A549 (cell line): ENCODE measurements at regions of chr11 and their contacts with region 1.

Region 1: GRCh38 chr11:65354265-65355012 is at the start of gene TIGD3:
- DNase-seq: peak; percentile 93 to 99
- ATAC-seq: peak; percentile 90 to 95
- H3K4me3 ChIP-seq: peak within 1 kb of the TSS; percentile 89
- H3K27ac ChIP-seq: peak within 1 kb of the TSS; percentile 75 to 88
- H3K4me1 ChIP-seq: 0 out of 3 replicates have a peak, but pooled peaks cover 4% of the 10 kb centered on the region
- CTCF ChIP-seq: no peak
- EP300 ChIP-seq: no peak
- POLR2A ChIP-seq: peak; percentile 65
- RAD21 ChIP-seq: no peak
- polyA plus RNA-seq, gene TIGD3: 0.30 and 0.37 TPM in 2 replicates

Region 2: DNA sequence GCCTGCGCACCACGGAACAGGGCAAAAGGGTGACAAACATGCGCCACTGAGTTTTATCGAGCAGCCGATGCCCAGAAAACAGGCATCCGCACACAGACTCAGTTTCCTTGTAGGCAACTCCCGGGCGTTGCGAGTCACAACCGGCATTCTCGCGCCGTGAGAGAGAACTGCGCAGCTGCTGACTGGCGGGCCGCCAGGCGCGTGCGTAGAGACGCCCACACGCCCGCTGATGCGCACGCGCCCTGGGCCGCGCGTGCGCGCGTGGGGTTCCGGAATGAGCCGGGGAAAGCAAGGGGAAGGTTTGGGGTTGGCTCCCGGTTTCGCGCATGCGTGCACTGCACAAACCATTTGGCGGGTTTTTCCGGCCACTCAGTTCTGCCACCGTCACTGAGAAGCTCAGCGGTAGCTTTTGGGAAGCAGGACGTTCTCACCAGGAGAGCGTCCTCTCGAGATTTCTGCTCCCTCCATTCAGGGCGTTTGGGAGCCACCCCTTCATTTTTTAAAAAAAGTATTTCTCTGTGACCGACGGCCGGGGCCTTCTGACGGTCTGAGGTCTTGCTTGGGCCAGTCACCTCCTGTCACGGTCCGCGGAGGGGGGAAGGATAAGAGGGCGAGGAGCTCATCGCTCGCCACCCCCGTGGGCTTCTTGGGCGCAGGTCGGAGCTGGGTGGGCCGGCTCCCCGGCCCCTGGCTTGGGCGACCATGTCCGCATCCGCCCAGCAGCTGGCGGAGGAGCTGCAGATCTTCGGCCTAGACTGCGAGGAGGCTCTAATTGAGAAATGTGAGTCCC is 92.7 kb before region 1 on chr11 and contains the start of gene POLA2:
- CTCF ChIA-PET with region 1: interaction called, 3,090 read pairs
- POLR2A ChIA-PET with region 1: no interaction called
- DNase-seq: peak; percentile 95 to 96
- ATAC-seq: peak; percentile 79 to 94
- H3K4me3 ChIP-seq: peak within 1 kb of the TSS; percentile 77
- H3K27ac ChIP-seq: peak within 1 kb of the TSS; percentile 82 to 93
- H3K4me1 ChIP-seq: peaks cover 11% of the 10 kb centered on the region
- CTCF ChIP-seq: no peak
- EP300 ChIP-seq: no peak
- POLR2A ChIP-seq: peak; percentile 85
- RAD21 ChIP-seq: no peak
- polyA plus RNA-seq, gene POLA2: 52.3 and 55.6 TPM in 2 replicates

Region 3: DNA sequence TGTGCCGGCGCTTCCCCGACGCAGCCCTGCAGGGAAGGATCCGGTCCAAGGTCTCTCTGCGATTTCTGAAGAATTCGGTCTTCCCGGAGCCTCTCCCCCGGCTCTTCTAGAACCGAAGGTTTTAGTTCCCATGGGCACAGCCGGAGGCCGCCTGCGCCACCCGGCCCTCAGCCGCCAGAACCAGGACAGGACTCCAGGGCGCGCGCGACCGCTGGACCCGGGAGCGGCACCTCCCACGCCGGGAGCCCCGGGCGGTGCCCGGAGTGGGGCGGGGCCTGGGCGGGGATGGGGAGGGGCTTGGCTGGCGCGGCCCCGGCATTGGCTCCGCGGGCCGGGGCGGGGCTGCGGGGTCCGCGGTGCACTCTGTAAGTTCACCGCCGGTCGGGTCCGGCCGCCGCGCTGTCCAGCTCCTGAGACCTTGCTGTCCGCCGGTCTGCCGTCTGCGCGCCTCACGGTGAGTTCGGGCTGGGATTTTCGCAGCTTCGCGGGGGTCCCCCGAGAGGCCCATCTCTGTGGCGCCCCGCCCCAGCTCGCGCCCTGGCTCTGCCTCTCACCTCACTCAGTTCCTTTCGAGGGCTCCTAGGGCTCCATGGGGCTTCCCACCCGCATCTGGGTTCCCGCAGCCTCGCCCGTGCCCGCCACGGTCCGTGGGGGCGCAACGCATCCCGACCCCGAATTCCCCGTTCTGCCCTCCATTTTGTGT is 39.8 kb before region 1 on chr11 and contains the start of gene CDC42EP2:
- CTCF ChIA-PET with region 1: interaction called, 3,090 read pairs
- POLR2A ChIA-PET with region 1: no interaction called
- DNase-seq: peak; percentile 77 to 84
- ATAC-seq: peak; percentile 73 to 88
- H3K4me3 ChIP-seq: peak within 1 kb of the TSS; percentile 99
- H3K27ac ChIP-seq: peak within 1 kb of the TSS; percentile 91
- H3K4me1 ChIP-seq: peaks cover 55% of the 10 kb centered on the region
- CTCF ChIP-seq: no peak
- EP300 ChIP-seq: no peak
- POLR2A ChIP-seq: peak; percentile 70
- RAD21 ChIP-seq: no peak
- polyA plus RNA-seq, gene CDC42EP2: 3.0 and 3.7 TPM in 2 replicates

Region 4: GRCh38 chr11:65340226-65340625 is 14.2 kb before region 1 on chr11:
- CTCF ChIA-PET with region 1: interaction called, 58 read pairs
- POLR2A ChIA-PET with region 1: no interaction called
- DNase-seq: no peak
- ATAC-seq: no peak
- H3K4me3 ChIP-seq: no peak overlapping the region
- H3K27ac ChIP-seq: no peak overlapping the region
- H3K4me1 ChIP-seq: peaks cover 3% of the 10 kb centered on the region; the same call in 2 of the 3 replicates
- CTCF ChIP-seq: no peak
- EP300 ChIP-seq: no peak
- POLR2A ChIP-seq: no peak
- RAD21 ChIP-seq: no peak

Region 5: DNA sequence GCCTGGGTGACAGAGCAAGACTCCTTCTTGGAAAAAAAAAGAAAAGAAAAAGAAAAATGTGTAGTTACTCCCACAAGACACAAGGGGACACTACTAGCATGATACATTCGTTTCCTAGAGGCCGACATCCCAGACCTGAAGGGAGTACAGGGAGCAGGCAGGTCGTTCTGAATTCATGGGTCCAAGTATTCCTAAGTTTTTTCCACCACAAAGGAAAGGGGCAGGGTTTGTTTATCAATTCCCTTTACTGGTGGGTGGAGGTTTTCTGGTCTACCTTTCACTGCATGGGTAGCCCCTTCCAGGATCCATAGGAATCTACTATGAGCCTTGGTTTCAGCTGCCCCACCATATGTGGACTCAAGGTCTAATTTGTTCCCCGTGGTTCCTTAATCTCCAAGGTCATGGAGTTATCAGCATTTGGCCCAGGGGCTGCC is 11.9 kb after region 1 on chr11:
- CTCF ChIA-PET with region 1: interaction called, 10 read pairs
- POLR2A ChIA-PET with region 1: no interaction called
- DNase-seq: peak; percentile 88 to 90
- ATAC-seq: peak; percentile 84 to 85
- H3K4me3 ChIP-seq: no peak overlapping the region
- H3K27ac ChIP-seq: peak overlapping the region; percentile 45 to 72; a peak in 5 of 6 replicates
- H3K4me1 ChIP-seq: peaks cover 18% of the 10 kb centered on the region
- CTCF ChIP-seq: peak; percentile 85
- EP300 ChIP-seq: no peak
- POLR2A ChIP-seq: no peak
- RAD21 ChIP-seq: peak; percentile 91 to 96

Region 6: DNA sequence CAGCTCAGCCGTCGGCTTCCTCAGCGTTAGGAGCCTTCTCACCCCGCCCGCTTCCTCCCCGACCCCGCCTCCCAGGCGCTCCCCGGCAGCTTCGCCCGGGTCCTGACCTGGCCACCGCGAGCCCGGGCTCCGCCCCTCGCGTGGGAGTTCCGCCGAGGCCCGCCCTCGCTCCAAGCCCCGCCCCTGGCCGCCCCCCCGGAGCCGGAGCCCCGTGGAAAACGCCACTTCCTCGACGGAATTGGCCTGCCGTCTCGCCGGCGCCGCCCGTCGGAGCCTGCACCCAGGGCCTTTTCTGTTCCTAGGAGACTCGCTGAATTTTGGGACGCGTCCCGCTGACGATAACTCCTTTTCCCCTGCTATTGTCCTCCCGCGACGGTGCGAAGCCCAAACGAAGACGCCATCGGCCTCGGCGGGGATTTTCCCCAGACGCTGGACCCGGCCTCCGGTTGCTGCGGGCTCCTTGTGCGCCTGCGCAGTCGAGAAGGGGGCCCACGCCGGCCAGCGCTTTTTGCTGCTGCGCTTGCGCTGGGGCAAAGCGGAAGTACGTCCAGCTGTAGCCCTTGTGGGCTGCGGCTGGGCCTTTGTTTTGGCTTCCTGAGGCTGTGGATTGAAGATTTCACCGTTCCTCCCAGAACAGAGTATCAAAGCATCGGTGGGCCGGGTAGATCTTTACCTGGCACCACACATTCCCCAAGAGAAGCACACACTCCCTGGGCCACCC is 298.2 kb after region 1 on chr11:
- CTCF ChIA-PET with region 1: no interaction called
- POLR2A ChIA-PET with region 1: no interaction called
- DNase-seq: peak; percentile 91 to 97
- ATAC-seq: peak; percentile 65 to 84
- H3K4me3 ChIP-seq: peak overlapping the region; percentile 53
- H3K27ac ChIP-seq: peak overlapping the region; percentile 92
- H3K4me1 ChIP-seq: peaks cover 17% of the 10 kb centered on the region
- CTCF ChIP-seq: no peak
- EP300 ChIP-seq: no peak
- POLR2A ChIP-seq: peak; percentile 64
- RAD21 ChIP-seq: no peak